Endothelial cell of umbilical vein (primary cell): ENCODE measurements at regions of chr10 and their contacts with region 1.

Region 1: DNA sequence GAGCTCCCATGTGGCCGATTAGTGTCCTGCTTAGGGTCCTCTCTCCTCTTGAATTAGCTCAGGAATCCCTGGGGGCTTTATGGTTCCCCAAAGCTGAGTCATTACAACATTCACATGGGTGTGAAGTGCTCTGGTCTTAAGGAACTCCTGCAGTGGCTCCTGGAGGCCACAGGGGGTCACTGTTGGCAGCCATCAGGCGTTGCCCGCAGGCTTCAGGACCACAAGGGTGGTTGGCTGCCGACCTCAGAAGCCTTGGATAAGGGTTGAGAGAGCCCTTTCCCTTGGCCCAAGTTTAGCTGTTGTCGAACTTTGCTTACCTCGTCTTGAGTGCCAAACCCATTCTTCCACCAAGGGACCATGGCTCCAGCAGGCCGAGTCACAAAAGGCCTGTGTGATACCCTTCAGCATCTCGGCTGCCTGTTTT is 61.7 kb downstream of the SH2D4B start:
- DNase-seq: peak; percentile 62
- H3K4me3 ChIP-seq: no peak overlapping the region
- H3K27ac ChIP-seq: no peak overlapping the region
- H3K4me1 ChIP-seq: no peaks in the 10 kb centered on the region
- H3K27me3 ChIP-seq: no peaks in the 10 kb centered on the region
- CTCF ChIP-seq: peak; percentile 73 to 86
- POLR2A ChIP-seq: no peak

Region 2: DNA sequence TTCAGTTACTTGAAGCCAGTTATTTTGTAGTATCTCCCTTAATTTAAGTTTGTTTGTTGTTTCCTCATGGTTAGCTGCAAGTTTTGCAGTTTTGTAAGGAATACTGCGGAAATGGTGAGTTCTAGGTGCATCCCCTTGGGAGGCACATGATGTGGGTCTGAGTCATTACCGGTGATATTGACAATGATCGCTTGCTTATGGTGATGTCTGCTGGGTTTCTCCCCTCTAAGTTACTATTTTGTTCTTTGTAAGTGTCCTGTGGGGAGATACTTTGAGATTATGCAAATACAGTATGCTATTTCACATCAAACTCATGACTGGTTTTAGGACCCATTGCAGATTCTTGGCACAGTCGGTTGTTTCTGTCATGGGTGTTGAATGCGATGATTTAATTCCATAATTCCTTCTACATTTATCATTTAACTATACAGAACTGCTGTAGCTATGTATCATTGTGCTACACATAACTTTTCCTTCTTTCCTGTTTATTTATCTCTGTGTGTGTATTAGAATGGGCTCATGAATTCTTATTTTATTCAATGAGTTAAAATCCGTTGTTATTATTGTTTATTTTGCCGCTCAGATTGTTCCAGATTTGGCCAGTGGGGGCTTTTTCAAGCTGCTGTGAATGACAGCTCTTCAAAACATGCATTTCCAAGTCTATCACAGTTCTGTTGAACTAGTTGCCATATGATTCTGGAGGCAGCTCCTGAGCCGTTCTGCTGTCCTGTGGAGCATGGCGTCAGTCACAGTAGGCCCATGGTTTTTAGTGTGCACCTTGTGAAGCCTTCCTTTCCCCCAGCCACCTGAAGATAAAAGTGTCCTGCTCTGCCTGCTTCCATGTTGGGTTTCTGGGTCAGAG is 127.0 kb before region 1 on chr10:
- CTCF ChIA-PET with region 1: no interaction called
- POLR2A ChIA-PET with region 1: no interaction called
- dilution Hi-C with region 1: no loop called
- intact Hi-C with region 1: no loop called
- DNase-seq: peak; percentile 57
- H3K4me3 ChIP-seq: no peak overlapping the region
- H3K27ac ChIP-seq: peak overlapping the region; percentile 48
- H3K4me1 ChIP-seq: peaks cover 82% of the 10 kb centered on the region
- H3K27me3 ChIP-seq: no peaks in the 10 kb centered on the region
- CTCF ChIP-seq: peak in 1 of 2 donors; percentile 10
- POLR2A ChIP-seq: no peak

Region 3: GRCh38 chr10:80535671-80536365 is 63.6 kb before region 1 on chr10:
- CTCF ChIA-PET with region 1: interaction called, 4 read pairs
- POLR2A ChIA-PET with region 1: no interaction called
- dilution Hi-C with region 1: no loop called
- intact Hi-C with region 1: loop called (anchors 2 kb)
- DNase-seq: peak; percentile 54
- H3K4me3 ChIP-seq: peak overlapping the region; percentile 25 to 54 (median 39)
- H3K27ac ChIP-seq: no peak overlapping the region
- H3K4me1 ChIP-seq: peaks cover 4% of the 10 kb centered on the region
- H3K27me3 ChIP-seq: peaks cover 0 to 1% of the 10 kb centered on the region in 2 experiments
- CTCF ChIP-seq: peak; percentile 64 to 88
- POLR2A ChIP-seq: no peak

Region 4: GRCh38 chr10:80552151-80552646 is 47.2 kb before region 1 on chr10:
- CTCF ChIA-PET with region 1: interaction called, 13 read pairs
- POLR2A ChIA-PET with region 1: no interaction called
- dilution Hi-C with region 1: no loop called
- intact Hi-C with region 1: no loop called
- DNase-seq: peak; percentile 26
- H3K4me3 ChIP-seq: no peak overlapping the region
- H3K27ac ChIP-seq: no peak overlapping the region
- H3K4me1 ChIP-seq: no peaks in the 10 kb centered on the region
- H3K27me3 ChIP-seq: peaks cover 7 to 8% of the 10 kb centered on the region in 2 experiments
- CTCF ChIP-seq: no peak
- POLR2A ChIP-seq: no peak

Region 5: DNA sequence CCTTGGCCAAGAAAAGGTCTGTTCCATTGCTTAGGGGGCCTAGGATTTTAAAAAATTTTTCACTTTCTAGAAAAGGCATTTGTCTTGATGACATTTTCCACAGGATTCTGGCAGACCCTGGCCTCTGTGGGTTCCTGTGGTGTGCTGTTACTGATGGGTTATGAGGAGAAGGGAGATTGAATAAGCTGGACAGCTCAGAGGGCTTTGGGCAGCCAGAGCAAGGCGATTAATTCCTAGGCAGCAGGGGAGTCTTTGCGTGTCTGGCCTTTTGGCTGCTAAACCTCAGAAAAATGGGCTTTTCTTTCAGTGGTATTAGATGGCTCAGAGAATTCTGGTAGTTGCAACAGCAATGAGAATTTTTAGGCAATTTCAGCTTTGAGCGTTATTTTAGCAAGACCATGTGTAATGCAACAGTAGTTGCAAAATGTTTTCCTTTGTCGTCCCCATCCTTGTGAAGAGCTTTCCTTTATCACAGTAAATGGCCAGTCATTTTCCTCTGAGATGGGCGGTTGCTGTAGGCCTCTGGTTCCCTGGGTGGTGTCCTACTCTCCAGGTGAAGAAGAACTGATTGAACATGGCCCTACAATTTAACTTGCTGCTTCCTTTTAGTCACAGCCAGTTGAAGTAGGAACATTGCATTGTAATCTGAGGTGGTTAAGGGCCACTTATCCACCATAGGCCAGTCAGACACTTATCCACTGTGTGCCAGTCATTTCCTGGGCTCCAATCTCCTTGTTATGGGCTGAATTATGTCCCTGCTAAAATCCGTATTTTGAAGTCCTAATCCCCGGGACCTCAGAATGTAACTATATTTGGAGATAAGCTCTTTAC is 18.6 kb before region 1 on chr10:
- CTCF ChIA-PET with region 1: interaction called, 11 read pairs
- POLR2A ChIA-PET with region 1: no interaction called
- dilution Hi-C with region 1: no loop called
- intact Hi-C with region 1: no loop called
- DNase-seq: no peak
- H3K4me3 ChIP-seq: no peak overlapping the region
- H3K27ac ChIP-seq: no peak overlapping the region
- H3K4me1 ChIP-seq: no peaks in the 10 kb centered on the region
- H3K27me3 ChIP-seq: peaks cover 8 to 11% of the 10 kb centered on the region in 2 experiments
- CTCF ChIP-seq: no peak
- POLR2A ChIP-seq: no peak

Region 6: GRCh38 chr10:80612261-80612660 is 12.8 kb after region 1 on chr10:
- CTCF ChIA-PET with region 1: interaction called, 49 read pairs
- POLR2A ChIA-PET with region 1: no interaction called
- dilution Hi-C with region 1: no loop called
- intact Hi-C with region 1: no loop called
- DNase-seq: no peak
- H3K4me3 ChIP-seq: no peak overlapping the region
- H3K27ac ChIP-seq: no peak overlapping the region
- H3K4me1 ChIP-seq: no peaks in the 10 kb centered on the region
- H3K27me3 ChIP-seq: peaks cover 0 to 3% of the 10 kb centered on the region in 2 experiments
- CTCF ChIP-seq: no peak
- POLR2A ChIP-seq: no peak

Region 7: DNA sequence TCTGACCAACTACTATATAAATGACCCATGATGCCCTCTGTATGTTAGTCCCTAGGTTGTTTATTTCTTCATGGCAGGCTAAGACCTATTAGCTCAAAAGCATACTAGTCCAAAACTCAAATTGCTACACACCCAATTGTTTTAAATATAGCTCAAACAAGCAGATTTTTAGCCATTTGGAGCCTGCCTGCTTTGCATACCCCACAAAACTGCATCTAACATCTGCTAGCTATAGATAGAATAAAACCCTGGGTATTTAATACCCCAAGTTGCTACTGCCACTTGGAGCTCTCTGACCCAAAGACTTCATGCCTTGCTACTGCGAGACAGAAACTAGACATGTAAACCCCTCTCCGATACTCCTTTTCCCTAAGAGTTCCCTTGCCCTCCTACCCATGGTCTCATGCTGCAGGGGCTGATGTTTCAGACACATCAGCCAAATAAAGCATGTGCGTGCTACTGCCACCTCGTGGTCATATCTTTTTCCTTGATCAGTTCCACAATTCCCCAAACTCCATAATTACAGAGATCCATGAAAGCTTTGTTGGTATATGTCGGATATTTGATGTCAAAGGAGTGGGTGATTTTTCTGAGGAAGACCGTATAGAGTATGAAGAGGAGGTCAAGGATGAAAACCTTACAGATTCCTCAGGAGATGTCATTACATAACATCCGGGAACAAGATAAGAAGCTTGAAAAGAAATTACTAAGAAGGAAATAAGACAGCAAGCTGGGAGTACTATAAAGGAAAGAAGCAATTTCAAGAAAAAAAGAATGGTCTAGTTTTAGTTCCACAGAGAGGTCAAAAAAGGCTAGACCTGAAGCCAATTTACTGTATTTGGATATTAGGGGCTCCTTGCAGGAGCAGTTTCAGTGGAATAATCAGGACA is 324.9 kb after region 1 on chr10:
- CTCF ChIA-PET with region 1: interaction called, 3 read pairs
- POLR2A ChIA-PET with region 1: no interaction called
- dilution Hi-C with region 1: no loop called
- intact Hi-C with region 1: loop called (anchors 1 kb)
- DNase-seq: peak; percentile 56
- H3K4me3 ChIP-seq: no peak overlapping the region
- H3K27ac ChIP-seq: no peak overlapping the region
- H3K4me1 ChIP-seq: no peaks in the 10 kb centered on the region
- H3K27me3 ChIP-seq: peaks cover 0 to 4% of the 10 kb centered on the region in 2 experiments
- CTCF ChIP-seq: peak; percentile 46 to 63
- POLR2A ChIP-seq: no peak